Left ventricle myocardium superior (tissue), 1 donor: ENCODE measurements at regions of chr15 and their contacts with region 1.

Region 1: GRCh38 chr15:45166834-45167630 is 20.7 kb downstream of the SHF start:
- DNase-seq: peak; percentile 89
- ATAC-seq: peak; percentile 84

Region 2: DNA sequence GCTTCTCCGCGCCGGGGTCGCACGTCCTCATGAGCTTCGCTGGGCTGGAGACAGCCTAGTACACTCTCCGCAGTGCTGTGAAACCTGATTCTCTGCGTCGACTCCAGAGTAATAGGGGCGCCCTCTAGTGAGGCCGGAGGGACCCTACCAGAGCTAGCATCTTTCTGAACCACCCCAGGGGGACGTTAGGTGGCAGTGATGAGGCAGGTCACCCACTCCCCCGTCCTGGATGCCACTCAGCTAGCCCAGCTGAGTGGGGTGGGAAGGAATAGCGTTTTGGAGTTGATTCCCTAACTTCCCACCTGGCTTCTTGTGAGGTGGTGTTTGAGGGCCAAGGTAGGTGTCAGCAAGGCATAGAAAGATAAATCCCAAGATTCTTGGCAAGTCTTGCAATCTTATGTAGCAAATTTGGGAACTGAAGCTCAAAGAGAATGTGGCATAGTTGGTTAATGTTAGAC is 48.9 kb before region 1 on chr15:
- intact Hi-C with region 1: no loop called
- DNase-seq: peak; percentile 89
- ATAC-seq: peak; percentile 98

Region 3: DNA sequence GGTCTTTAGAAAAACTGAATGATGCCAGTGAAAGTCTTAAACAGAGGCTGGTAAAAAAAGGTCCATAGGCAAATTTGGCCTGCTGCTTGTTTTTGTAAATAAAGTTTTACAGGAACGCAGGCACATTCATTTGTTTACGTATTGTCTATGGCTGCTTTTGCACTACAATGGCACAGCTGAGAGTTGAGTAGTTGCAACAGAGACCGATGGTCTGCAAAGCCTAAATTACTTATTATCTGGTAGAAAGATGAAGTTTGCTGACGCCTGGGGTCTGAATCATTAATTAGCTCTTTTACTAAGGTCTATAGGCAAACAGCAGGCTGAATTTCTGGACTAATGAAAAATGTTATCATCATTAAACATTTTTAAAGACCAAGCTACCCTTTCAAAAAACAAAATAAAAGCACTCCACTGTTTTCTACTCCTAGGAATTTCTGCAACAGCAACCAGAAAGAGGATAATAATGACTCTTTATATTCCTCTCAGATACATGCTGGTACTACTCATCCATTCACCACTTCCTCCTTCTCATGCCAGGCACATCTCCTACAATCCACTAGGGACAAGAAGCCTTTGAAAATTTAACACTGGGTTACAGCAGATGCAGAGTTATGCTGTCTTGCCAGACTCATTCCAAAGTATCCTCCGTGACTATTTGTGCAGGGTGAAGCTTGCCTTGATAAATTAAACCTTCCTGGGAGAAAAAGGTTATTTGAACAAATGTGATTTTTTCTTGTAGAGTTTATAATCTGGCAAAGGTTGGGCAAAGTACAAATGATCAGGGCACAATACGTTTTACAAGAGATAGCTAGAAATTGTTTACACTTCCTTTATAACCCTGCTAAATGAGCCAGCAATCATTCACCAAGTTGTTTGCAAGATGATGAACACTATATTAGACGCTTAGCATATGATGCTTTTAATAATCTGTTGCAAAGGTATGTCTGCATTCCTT is 205.3 kb after region 1 on chr15:
- intact Hi-C with region 1: no loop called
- DNase-seq: no peak
- ATAC-seq: no peak

Region 4: DNA sequence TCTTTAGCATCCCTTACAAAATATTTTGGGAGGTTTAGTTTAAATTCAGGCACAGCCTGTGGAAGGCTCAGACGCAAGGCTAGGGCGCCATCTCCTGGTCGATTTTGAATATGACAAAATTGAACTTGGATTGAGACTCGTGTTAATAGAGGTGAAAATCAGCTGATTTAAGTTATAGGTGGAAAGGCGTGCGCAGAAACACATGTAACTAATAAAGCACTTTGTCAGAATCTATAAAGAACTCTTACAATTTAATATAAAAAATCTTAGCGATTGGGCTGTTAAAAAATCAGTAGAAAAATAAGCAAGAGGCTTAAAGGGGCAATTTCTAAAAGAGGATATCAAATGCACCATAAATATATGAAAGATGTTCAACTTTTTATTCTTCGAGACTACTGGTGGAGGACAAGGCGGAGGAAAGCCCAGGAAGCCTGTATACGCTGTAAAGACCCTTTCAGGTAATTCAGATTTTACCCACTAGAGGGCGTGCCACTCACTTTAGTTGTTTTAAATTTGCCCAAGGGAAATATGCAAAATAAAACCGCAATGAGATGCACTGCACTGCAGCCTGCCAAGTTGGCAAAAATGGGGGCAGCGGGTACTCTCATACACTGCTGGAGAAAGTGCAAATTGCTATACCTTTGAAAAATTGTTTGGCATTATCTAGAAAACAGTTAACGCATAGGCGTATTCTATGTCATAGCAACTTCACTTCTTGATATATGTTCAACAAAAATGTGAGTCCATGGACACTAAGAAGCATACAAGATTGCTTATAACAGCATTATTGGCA is 290.8 kb after region 1 on chr15:
- intact Hi-C with region 1: loop called (anchors 10 kb)
- DNase-seq: peak; percentile 42
- ATAC-seq: peak; percentile 84